ENCODE measurements at regions of chr3 and their contacts with region 1.

Region 1: GRCh38 chr3:4350789-4351163 is 47.6 kb downstream of the SETMAR start:
- DNase-seq: no peak
- ATAC-seq: peak; percentile 91 to 94
- H3K4me3 ChIP-seq: peak overlapping the region; percentile 42
- H3K27ac ChIP-seq: peak overlapping the region; percentile 72
- H3K4me1 ChIP-seq: peaks cover 17% of the 10 kb centered on the region
- H3K27me3 ChIP-seq: no peaks in the 10 kb centered on the region
- CTCF ChIP-seq: peak; percentile 79

Region 2: GRCh38 chr3:4245671-4246070 is 105.1 kb before region 1 on chr3:
- intact Hi-C with region 1: no loop called
- DNase-seq: no peak
- ATAC-seq: no peak
- H3K4me3 ChIP-seq: no peak overlapping the region
- H3K27ac ChIP-seq: no peak overlapping the region
- H3K4me1 ChIP-seq: no peaks in the 10 kb centered on the region
- H3K27me3 ChIP-seq: no peaks in the 10 kb centered on the region
- CTCF ChIP-seq: no peak

Region 3: GRCh38 chr3:4633078-4634004 is 282.6 kb after region 1 on chr3:
- intact Hi-C with region 1: loop called (anchors 10 kb)
- DNase-seq: no peak
- ATAC-seq: peak; percentile 80 to 84
- H3K4me3 ChIP-seq: no peak overlapping the region
- H3K27ac ChIP-seq: no peak overlapping the region
- H3K4me1 ChIP-seq: no peaks in the 10 kb centered on the region
- H3K27me3 ChIP-seq: no peaks in the 10 kb centered on the region
- CTCF ChIP-seq: peak; percentile 85